ENCODE measurements at regions of chr2 and their contacts with region 1.

Region 1: GRCh38 chr2:64330281-64331113 is 123.5 kb upstream of the LGALSL start:
- DNase-seq: peak; percentile 86
- H3K4me3 ChIP-seq: peak overlapping the region; percentile 15 to 34 (median 20)
- H3K27ac ChIP-seq: no peak overlapping the region
- H3K4me1 ChIP-seq: peaks cover 14% of the 10 kb centered on the region
- H3K27me3 ChIP-seq: no peaks in the 10 kb centered on the region
- CTCF ChIP-seq: peak; percentile 83 to 87
- POLR2A ChIP-seq: no peak

Region 2: DNA sequence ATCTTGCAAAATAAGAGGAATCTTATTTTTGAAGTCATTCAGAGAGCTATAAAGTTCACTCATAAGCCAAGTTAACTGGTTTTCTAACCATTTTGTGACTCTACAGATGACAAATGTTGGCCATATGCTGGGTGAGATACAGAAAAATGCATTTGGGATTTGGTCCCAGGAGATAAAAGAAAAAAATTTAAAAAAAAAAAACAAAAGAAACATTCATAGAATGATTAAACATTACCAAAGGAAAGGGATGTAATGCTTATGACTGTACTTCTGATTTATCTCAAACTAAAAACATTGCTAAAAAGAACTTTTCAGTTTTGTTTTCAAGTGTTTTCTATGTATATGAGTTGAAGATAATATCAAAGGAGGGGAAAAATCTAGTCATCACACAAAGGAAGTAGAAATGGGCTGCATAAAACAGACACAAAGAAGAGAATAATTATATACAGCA is 229.3 kb before region 1 on chr2:
- CTCF ChIA-PET with region 1: interaction called, 26 read pairs
- POLR2A ChIA-PET with region 1: no interaction called
- dilution Hi-C with region 1: no loop called
- intact Hi-C with region 1: no loop called
- DNase-seq: peak; percentile 84
- H3K4me3 ChIP-seq: peak overlapping the region in 1 of 3 experiments; percentile 34
- H3K27ac ChIP-seq: peak overlapping the region; percentile 60
- H3K4me1 ChIP-seq: peaks cover 39% of the 10 kb centered on the region
- H3K27me3 ChIP-seq: no peaks in the 10 kb centered on the region
- CTCF ChIP-seq: no peak
- POLR2A ChIP-seq: no peak

Region 3: GRCh38 chr2:64122358-64122757 is 208.1 kb before region 1 on chr2:
- CTCF ChIA-PET with region 1: no interaction called
- POLR2A ChIA-PET with region 1: no interaction called
- dilution Hi-C with region 1: no loop called
- intact Hi-C with region 1: no loop called
- DNase-seq: no peak
- H3K4me3 ChIP-seq: no peak overlapping the region
- H3K27ac ChIP-seq: no peak overlapping the region
- H3K4me1 ChIP-seq: no peaks in the 10 kb centered on the region
- H3K27me3 ChIP-seq: no peaks in the 10 kb centered on the region
- CTCF ChIP-seq: no peak
- POLR2A ChIP-seq: no peak

Region 4: GRCh38 chr2:64311948-64312621 is 18.4 kb before region 1 on chr2:
- CTCF ChIA-PET with region 1: interaction called, 76 read pairs
- POLR2A ChIA-PET with region 1: no interaction called
- dilution Hi-C with region 1: no loop called
- intact Hi-C with region 1: no loop called
- DNase-seq: peak; percentile 89
- H3K4me3 ChIP-seq: no peak overlapping the region
- H3K27ac ChIP-seq: no peak overlapping the region
- H3K4me1 ChIP-seq: no peaks in the 10 kb centered on the region
- H3K27me3 ChIP-seq: peaks cover 0 to 7% of the 10 kb centered on the region in 2 experiments
- CTCF ChIP-seq: peak; percentile 48 to 68
- POLR2A ChIP-seq: no peak

Region 5: GRCh38 chr2:64453770-64454385 is 123.4 kb after region 1 on chr2 and contains the start of gene LGALSL:
- CTCF ChIA-PET with region 1: interaction called, 6 read pairs
- POLR2A ChIA-PET with region 1: no interaction called
- dilution Hi-C with region 1: no loop called
- intact Hi-C with region 1: loop called (anchors 1 kb)
- DNase-seq: peak; percentile 66
- H3K4me3 ChIP-seq: peak within 1 kb of the TSS; percentile 60 to 93 (median 65)
- H3K27ac ChIP-seq: peak within 1 kb of the TSS; percentile 65
- H3K4me1 ChIP-seq: peaks cover 8% of the 10 kb centered on the region
- H3K27me3 ChIP-seq: peaks cover under 1 to 4% of the 10 kb centered on the region in 2 experiments
- CTCF ChIP-seq: no peak
- POLR2A ChIP-seq: no peak
- total RNA-seq, gene LGALSL: 2.3 and 5.8 TPM in 2 replicates

Region 6: DNA sequence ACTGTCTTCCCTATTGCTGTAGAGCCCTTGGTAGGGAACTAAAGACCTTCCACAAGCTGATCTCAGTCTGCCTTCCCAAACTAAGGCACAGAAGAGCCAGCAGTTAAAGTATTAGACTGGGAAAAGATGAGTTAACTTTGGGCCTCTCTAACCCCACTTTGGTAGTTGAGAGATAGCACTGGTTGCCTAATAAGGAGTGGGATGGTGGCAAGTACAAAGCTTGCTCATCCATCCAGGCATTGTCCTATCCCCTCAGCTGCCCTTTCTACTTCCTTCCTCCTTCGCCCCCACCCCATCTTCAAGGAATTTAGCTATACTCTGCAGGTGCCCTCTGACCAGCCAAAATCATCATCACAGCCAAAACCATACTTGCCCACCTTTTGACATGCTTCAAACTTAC is 171.4 kb after region 1 on chr2:
- CTCF ChIA-PET with region 1: interaction called, 10 read pairs
- POLR2A ChIA-PET with region 1: no interaction called
- dilution Hi-C with region 1: no loop called
- intact Hi-C with region 1: no loop called
- DNase-seq: no peak
- H3K4me3 ChIP-seq: no peak overlapping the region
- H3K27ac ChIP-seq: no peak overlapping the region
- H3K4me1 ChIP-seq: no peaks in the 10 kb centered on the region
- H3K27me3 ChIP-seq: peaks cover 24 to 37% of the 10 kb centered on the region in 2 experiments
- CTCF ChIP-seq: no peak
- POLR2A ChIP-seq: no peak

Region 7: GRCh38 chr2:64586883-64587481 is 256.5 kb after region 1 on chr2:
- CTCF ChIA-PET with region 1: interaction called, 23 read pairs
- POLR2A ChIA-PET with region 1: no interaction called
- dilution Hi-C with region 1: no loop called
- intact Hi-C with region 1: no loop called
- DNase-seq: peak; percentile 69
- H3K4me3 ChIP-seq: no peak overlapping the region
- H3K27ac ChIP-seq: no peak overlapping the region
- H3K4me1 ChIP-seq: peaks cover 8% of the 10 kb centered on the region
- H3K27me3 ChIP-seq: no peaks in the 10 kb centered on the region
- CTCF ChIP-seq: peak; percentile 35 to 54
- POLR2A ChIP-seq: no peak

Region 8: DNA sequence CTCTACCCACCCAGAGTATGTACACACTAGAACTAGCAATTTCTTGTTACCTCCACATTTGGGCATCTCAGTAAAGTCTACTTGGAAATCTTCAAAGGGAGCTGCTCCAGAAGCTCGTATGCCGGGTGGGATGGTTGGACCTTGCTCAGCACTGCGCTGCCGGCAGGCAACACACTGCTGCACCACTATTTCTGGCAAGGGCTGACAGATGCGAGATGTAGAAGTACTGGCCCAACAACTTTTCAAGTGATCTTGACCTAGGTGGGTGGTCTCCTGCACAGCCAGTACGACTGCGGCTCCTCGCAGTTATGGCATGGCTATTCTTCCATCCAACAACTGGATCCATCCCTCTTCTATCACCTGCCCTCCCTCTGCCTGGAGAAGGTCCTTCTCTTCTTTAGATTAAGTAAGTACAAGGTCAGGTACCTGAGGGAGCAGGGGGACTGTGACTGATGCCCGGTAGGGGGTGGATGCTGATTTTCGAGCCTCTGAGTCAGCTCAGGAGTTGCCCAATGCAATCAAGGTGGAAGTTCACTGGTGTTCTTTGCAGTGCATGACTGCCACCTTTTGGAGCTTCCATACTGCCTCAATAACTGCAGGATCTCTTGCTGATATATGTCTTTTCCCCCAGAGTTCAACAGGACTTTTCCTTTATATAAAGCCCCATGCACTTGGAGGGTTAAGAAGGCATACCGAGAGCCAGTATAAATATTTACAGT is 558.3 kb after region 1 on chr2:
- CTCF ChIA-PET with region 1: interaction called, 24 read pairs
- POLR2A ChIA-PET with region 1: no interaction called
- dilution Hi-C with region 1: no loop called
- intact Hi-C with region 1: no loop called
- DNase-seq: peak; percentile 25
- H3K4me3 ChIP-seq: no peak overlapping the region
- H3K27ac ChIP-seq: no peak overlapping the region
- H3K4me1 ChIP-seq: no peaks in the 10 kb centered on the region
- H3K27me3 ChIP-seq: peaks cover 0 to 2% of the 10 kb centered on the region in 2 experiments
- CTCF ChIP-seq: peak in 1 of 2 donors; percentile 17
- POLR2A ChIP-seq: no peak

Measured in endothelial cell of umbilical vein (primary cell).